ENCODE measurements at regions of chr11 and their contacts with region 1.

Region 1: DNA sequence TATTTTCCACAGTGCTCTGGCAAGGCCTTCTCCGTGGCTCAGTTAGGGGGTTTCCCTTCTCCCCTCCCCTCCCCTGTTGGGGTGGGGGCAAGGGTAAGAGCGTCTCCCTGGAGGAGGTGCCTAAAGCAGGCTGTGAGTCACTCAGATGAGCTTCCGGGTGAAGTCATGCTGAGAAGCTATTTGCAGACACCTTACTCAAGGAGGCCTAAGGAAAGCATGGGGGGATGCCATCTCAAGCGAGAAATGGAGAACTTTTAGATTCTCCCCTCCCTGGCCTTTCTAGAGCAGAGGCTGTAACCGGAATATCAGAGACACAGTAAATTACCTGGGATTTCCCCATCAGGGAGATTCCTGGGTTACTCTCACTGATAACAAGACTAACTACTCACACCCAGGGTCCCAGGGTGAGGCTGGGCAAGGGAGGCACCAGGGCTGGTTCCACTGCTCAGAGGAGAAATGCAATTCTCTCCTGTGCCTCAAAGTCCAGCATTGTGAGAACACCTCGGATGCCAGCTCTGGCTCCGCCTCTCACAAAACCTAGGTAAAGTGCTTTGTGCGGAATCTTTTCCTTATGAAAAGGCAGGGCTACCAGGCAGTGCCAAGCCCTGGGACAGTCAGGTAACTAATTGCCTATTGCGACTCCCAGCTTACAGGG is 123.6 kb downstream of the ABTB2 start:
- DNase-seq: peak; percentile 94
- H3K4me3 Mint-ChIP-seq: peak overlapping the region; percentile 30
- H3K27ac Mint-ChIP-seq: peak overlapping the region; percentile 73
- H3K4me1 Mint-ChIP-seq: peaks cover 60% of the 10 kb centered on the region
- H3K27me3 Mint-ChIP-seq: peaks cover 1% of the 10 kb centered on the region

Region 2: DNA sequence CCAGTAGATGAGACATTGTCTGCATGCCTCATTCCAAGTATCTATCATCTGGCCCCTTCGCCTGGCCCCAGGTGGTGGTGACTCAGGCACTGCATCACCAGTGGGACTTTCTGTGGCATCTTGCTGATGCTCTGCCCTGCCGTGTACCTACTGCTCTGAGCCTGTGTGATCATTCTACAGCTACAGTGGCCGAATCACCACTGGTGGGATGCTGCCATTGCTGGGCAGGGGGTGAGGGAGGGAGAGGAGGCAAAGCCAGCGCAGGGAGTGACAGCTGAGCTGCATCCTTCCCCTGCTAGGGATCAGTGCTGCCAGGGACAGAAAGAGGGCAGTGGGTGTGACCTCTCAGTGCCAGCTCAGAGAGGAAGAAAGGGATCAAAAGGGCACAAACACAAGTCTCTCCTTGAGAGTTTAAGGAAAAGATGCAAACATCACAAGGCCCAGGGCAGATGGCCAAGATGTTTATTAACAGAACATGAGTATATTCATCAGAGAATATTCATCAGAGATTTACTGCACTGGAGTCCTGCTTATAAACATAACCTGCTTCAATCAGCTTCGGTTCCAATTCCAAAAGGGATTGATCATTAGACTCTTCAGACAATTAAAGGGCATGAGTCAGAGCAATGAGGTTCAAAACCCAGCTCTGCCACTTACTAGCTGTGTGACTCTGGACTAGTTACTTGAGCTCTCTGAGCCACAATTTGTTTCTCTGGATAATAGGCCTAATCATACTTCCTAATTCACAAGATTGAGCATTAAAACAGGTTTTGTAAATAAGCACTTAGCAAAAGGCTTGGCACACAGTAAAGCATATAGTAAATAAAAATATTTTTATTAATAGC is 19.0 kb before region 1 on chr11:
- intact Hi-C with region 1: loop called (anchors 1 kb)
- DNase-seq: peak; percentile 74
- H3K4me3 Mint-ChIP-seq: peak overlapping the region; percentile 30
- H3K27ac Mint-ChIP-seq: peak overlapping the region; percentile 91
- H3K4me1 Mint-ChIP-seq: peaks cover 12% of the 10 kb centered on the region
- H3K27me3 Mint-ChIP-seq: peaks cover 7% of the 10 kb centered on the region

Region 3: GRCh38 chr11:34250732-34251639 is 16.8 kb after region 1 on chr11:
- intact Hi-C with region 1: loop called (anchors 1 kb)
- DNase-seq: peak; percentile 86
- H3K4me3 Mint-ChIP-seq: peak overlapping the region; percentile 56
- H3K27ac Mint-ChIP-seq: peak overlapping the region; percentile 49
- H3K4me1 Mint-ChIP-seq: peaks cover 63% of the 10 kb centered on the region
- H3K27me3 Mint-ChIP-seq: peaks cover 16% of the 10 kb centered on the region